Activated naive CD4-positive, alpha-beta T cell treated with anti-CD3 and anti-CD28 coated beads for 36 hours (primary cell): ENCODE measurements at regions of chr2 and their contacts with region 1.

Region 1: GRCh38 chr2:203535078-203535783 is at the start of gene RAPH1:
- DNase-seq: peak; percentile 79
- H3K4me3 Mint-ChIP-seq: peak within 1 kb of the TSS; percentile 82
- H3K27ac Mint-ChIP-seq: peak within 1 kb of the TSS; percentile 61
- H3K4me1 Mint-ChIP-seq: peaks cover 21% of the 10 kb centered on the region
- H3K27me3 Mint-ChIP-seq: peaks cover 6% of the 10 kb centered on the region
- total RNA-seq, gene RAPH1: 8.6 to 11.9 TPM

Region 2: DNA sequence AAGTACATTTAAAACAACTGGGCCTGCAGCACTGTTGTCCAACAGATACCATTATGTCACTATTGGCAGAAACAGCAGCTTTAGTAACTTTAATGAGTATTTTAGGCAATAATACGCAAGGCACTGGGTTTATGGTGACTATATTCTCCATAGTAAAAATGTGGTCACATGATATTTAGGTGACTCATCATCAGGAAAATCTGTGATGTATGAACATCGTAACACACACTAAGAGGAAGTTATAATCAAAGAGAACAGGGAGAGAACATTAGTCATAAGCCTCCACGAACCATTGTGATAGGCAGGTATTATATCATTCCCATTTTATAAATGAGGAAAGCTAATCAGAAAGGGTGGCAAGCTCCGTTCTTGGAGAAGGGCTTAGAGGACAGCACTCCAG is 37.1 kb before region 1 on chr2:
- CTCF ChIA-PET with region 1: no interaction called
- intact Hi-C with region 1: loop called (anchors 2 kb)
- DNase-seq: no peak
- H3K4me3 Mint-ChIP-seq: no peak overlapping the region
- H3K27ac Mint-ChIP-seq: no peak overlapping the region
- H3K4me1 Mint-ChIP-seq: peaks cover 26% of the 10 kb centered on the region
- H3K27me3 Mint-ChIP-seq: no peaks in the 10 kb centered on the region

Region 3: DNA sequence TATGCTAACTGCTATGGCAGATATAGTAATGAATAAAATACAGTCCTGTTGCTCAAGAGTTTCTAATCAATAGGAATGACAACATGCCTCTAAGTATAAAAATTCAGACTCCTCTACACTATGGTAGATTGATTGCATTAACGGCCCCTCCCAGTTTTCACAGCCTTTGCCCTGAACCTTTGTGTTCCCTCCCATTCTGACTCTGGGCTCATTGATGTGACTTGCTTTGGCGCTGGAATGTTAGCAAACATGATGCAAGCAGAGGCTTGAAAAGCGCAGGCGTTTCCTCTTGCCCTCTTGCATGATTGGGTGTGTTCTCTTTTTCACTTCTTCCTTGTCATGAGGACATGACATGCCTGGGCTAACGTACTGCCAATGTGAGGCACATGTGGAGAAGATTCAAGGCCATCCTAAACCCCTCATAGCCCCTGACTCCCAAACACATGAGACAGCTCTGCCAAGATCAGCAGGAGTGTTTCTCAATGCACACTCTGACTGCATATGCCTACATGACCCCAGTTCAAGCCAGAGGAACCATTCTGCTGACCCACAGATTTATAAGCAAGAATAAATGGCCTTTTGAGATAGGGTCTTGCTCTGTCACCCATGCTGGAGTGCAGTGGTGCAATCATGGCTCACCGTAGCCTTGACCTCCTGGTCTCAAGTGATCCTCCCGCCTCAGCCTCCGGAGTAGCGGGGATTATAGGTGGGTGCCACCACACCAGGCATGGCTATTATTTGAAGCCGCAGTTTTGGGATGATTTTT is 121.5 kb after region 1 on chr2:
- CTCF ChIA-PET with region 1: no interaction called
- intact Hi-C with region 1: loop called (anchors 1 kb)
- DNase-seq: peak; percentile 64
- H3K4me3 Mint-ChIP-seq: no peak overlapping the region
- H3K27ac Mint-ChIP-seq: peak overlapping the region; percentile 55
- H3K4me1 Mint-ChIP-seq: peaks cover 39% of the 10 kb centered on the region
- H3K27me3 Mint-ChIP-seq: no peaks in the 10 kb centered on the region